ENCODE measurements at regions of chrX and their contacts with region 1.

Region 1: GRCh38 chrX:51461053-51462044 is 35.0 kb downstream of the NUDT11 start:
- DNase-seq: peak; percentile 11
- CTCF ChIP-seq: peak; percentile 73

Region 2: DNA sequence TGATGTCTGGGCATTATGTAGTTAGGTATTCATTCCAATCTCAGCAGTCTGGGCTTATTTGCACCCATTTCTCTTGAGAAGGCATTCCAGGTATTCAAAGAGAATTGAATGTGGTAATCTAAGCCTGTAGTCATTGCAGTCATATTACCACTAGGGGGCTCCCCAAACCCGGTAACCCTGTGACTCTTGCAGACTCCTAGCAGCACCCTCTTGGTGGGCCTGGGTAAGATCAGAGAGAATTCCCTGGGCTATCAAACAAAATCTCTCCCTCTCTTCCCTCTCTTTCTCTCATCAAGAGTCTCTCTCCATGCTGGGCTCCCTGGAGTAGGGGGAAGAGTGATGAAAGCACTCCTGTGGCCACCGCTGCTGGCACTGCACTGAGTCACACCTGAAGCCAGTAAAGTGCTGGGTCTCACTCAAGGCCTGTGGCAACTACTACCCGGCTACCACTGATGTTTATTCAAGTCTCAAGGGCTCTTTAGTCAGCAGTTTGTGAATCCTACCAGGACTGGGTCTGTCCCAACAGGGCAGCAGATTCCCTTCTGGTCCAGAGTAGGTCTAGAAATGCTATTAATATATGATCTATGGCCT is 316.4 kb before region 1 on chrX:
- in situ Hi-C with region 1: loop called (anchors 25 kb)
- DNase-seq: peak; percentile 31
- CTCF ChIP-seq: peak; percentile 63

Measured in GM13976 (cell line).